ENCODE measurements at regions of chr1 and their contacts with region 1.

Region 1: DNA sequence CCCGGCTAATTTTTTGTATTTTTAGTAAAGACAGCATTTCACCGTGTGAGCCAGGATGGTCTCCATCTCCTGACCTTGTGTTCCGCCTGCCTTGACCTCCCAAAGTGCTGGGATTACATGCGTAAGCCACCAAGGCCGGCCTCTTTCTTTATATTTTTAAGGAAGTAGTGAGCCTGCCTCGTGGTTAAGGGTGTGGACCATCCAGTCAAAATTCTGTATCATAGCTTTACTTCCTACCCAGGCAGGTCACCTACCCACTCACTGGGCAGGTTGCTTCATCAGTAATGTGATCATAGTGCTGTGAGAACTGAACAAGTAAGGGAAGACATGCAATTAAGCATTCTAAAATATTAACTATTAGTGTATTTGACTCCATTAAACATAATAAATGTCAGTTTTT is 8.1 kb upstream of the ACOT7 start:
- DNase-seq: no peak
- H3K4me3 ChIP-seq: no peak overlapping the region
- H3K4me3 Mint-ChIP-seq: no peak overlapping the region
- H3K27ac Mint-ChIP-seq: no peak overlapping the region
- H3K4me1 ChIP-seq: no peaks in the 10 kb centered on the region
- H3K4me1 Mint-ChIP-seq: peaks cover 5% of the 10 kb centered on the region
- H3K27me3 ChIP-seq: no peaks in the 10 kb centered on the region
- H3K27me3 Mint-ChIP-seq: no peaks in the 10 kb centered on the region
- CTCF ChIP-seq: no peak

Region 2: DNA sequence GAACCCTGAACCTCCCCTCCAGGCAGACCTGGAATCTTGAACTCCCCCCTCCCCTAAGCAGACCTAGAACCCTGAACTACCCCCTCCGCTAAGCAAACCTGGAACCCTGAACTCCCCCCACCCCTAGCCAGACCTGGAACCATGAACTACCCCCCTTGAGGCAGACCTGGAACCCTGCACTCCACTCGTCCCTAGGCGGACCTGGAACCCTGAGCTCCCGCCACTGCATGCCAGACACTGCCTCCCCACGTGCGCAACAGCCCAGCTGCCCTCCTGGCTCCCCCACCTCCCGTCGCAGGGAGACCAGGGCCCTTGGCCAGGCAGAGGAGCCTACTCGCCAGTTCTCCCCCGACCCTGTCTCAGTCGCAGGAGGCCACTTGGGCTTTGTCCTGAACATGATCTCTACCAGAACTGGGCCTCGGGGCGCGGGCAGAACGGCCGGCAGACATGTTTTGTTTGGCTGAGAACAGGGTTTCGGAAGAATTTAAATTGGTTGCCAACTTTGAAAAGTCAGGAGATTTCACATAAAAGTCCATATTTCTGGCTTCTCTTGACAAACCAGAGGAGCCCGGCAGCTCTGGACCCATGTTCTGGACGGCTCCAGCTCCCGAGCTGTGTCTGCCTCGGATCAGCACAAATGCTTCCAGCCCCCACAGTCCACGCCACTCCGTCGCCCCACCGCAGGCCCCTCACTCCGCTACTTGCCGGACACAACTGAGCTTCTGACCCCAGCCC is 99.0 kb after region 1 on chr1:
- CTCF ChIA-PET with region 1: interaction called, 14 read pairs
- POLR2A ChIA-PET with region 1: no interaction called
- intact Hi-C with region 1: no loop called
- DNase-seq: no peak
- H3K4me3 ChIP-seq: no peak overlapping the region
- H3K4me3 Mint-ChIP-seq: no peak overlapping the region
- H3K27ac Mint-ChIP-seq: no peak overlapping the region
- H3K4me1 ChIP-seq: peaks cover 6% of the 10 kb centered on the region; the same call in 1 of the 2 replicates
- H3K4me1 Mint-ChIP-seq: no peaks in the 10 kb centered on the region
- H3K27me3 ChIP-seq: no peaks in the 10 kb centered on the region
- H3K27me3 Mint-ChIP-seq: no peaks in the 10 kb centered on the region
- CTCF ChIP-seq: no peak